AG04449 (cell line): ENCODE measurements at regions of chr2 and their contacts with region 1.

Region 1: DNA sequence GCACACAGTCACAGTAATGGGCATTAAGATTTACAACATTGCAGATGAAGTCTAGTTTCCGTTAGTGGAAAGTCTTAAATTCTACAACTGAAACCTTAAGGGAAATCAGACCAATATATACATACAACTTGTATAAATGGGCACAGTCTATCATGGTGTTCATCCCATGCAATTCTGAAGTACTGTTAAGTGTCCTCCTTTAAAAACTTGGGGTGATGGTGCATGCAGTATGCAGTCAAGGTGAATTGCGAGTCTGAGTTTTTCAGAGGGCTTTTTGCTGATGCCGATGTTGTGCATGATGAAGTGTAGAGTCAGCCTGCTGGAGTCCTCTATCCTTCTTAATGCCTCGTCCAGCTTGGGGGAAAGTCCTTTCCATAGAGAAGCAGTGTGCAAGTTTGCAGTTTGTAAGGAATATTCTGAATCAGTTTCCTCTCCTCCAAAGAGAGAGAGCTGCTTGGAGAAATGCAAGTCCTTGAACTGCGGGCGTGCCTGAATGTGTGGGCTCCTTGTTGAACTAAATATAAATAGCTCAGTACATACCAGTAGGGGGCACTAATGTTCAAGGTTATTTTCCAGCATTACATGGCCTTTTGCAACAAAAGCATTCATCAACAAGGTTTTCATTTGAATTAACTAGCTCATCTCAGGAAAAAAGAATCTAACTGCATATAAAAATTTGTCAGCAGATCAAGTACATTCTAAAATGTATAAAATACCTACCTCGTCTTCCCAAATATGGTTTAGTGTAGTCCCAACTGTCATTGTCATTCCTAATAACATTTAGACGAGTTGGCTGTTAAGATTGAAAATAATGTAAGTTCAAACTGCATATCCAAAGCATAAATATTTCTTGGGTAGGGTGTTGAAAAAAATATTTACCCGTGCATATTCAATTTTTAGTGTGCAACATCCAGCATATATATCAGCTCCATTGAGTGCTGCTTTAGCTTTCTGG is 21.3 kb downstream of the HNRNPLL start:
- DNase-seq: peak; percentile 26
- H3K4me3 ChIP-seq: no peak overlapping the region
- CTCF ChIP-seq: peak; percentile 43

Region 2: DNA sequence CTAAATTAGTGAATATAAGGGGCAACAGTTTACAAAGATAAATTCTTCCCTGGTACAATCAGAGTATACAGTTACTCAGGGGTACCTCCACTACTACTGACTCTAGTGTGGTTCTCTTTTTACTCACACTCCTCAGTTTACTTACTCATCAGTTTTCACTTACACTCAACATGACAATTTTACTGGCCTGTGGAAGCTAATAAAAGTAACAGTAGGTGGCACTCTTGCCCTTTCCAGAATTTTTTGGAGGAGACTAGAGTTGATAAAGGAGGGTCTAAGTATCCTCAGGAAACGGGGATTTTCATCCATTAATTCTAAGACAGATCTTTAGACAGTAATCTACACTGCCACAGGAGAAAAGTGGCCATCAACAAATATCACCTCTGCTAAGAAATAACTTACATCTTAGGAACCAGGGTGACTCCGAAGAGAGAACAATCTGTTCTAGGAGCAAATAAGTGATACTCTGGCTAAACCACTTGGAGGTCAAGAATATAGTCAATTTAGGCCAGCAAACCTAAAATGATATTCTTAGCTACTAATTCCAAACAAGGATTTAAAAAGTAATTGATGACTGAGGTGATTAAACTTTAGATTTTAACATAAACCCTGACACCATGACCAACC is 265.6 kb before region 1 on chr2:
- CTCF ChIA-PET with region 1: interaction called, 15 read pairs
- POLR2A ChIA-PET with region 1: no interaction called
- DNase-seq: peak; percentile 1
- H3K4me3 ChIP-seq: no peak overlapping the region
- CTCF ChIP-seq: peak; percentile 55

Region 3: DNA sequence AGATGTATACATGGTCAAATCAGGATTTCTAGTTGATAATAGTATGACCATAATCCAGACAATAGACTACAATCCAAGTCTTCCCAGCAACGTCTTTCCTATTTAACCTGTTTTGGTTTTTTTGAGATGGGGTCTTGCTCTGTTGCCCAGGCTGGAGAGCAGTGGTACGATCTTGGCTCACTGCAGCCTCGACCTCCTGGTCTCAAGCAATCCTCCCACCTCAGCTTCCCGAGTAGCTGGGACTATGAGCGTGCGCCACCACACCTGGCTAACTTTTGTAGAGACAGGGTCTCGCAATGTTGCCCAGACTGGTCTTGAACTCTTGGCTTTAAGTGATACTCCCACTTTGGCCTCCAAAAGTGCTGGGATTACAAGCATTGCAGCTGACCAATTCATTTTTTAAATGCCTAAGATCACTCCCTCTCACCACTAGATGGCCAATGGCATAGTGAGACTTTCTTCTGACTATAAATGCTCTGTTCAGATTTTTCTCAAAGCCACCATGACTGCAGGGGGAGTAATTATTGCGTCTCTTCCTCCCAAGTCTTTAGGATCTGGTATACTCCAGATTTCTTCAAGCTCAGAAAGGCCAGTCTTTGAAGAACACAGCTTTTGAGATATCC is 26.4 kb before region 1 on chr2:
- CTCF ChIA-PET with region 1: interaction called, 20 read pairs
- POLR2A ChIA-PET with region 1: no interaction called
- DNase-seq: no peak
- H3K4me3 ChIP-seq: no peak overlapping the region
- CTCF ChIP-seq: peak; percentile 30

Region 4: GRCh38 chr2:38602732-38603401 is 21.4 kb after region 1 on chr2 and contains the start of gene HNRNPLL:
- CTCF ChIA-PET with region 1: interaction called, 147 read pairs
- POLR2A ChIA-PET with region 1: no interaction called
- DNase-seq: peak; percentile 77
- H3K4me3 ChIP-seq: peak within 1 kb of the TSS; percentile 84
- CTCF ChIP-seq: peak; percentile 17

Region 5: GRCh38 chr2:38702413-38702812 is 120.9 kb after region 1 on chr2:
- CTCF ChIA-PET with region 1: interaction called, 14 read pairs
- POLR2A ChIA-PET with region 1: no interaction called
- DNase-seq: peak; percentile 81
- H3K4me3 ChIP-seq: no peak overlapping the region
- CTCF ChIP-seq: no peak

Region 6: GRCh38 chr2:38734299-38735058 is 153.0 kb after region 1 on chr2:
- CTCF ChIA-PET with region 1: interaction called, 321 read pairs
- POLR2A ChIA-PET with region 1: no interaction called
- DNase-seq: no peak
- H3K4me3 ChIP-seq: no peak overlapping the region
- CTCF ChIP-seq: no peak

Region 7: GRCh38 chr2:38750891-38751595 is 169.6 kb after region 1 on chr2 and contains the start of gene SRSF7:
- CTCF ChIA-PET with region 1: interaction called, 15 read pairs
- POLR2A ChIA-PET with region 1: interaction called, 11 read pairs
- DNase-seq: peak; percentile 97
- H3K4me3 ChIP-seq: peak within 1 kb of the TSS; percentile 100
- CTCF ChIP-seq: no peak